Left ventricle myocardium superior (tissue), 1 donor: ENCODE measurements at regions of chr6 and their contacts with region 1.

Region 1: DNA sequence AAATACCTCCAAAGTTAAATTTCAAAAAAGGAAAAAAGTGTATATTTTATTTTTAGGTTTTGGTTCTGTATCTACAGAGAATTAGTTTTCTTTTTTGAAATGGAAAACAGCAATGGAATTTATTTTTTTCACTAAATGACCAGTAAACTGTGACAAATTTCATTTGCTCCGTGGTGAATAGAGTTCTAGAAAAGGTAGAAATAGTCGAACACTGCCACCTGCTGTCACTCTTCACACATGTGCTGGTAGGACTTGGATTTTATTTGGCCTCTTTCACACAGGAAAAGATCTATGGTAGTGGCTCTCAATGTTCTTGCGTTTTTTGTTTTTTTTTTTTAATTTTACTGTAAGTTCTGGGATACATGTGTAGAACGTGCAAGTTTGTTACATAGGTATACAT is 312.5 kb downstream of the EYA4 start:
- DNase-seq: no peak
- ATAC-seq: peak; percentile 62

Region 2: GRCh38 chr6:132830334-132830751 is 723.3 kb before region 1 on chr6:
- intact Hi-C with region 1: loop called (anchors 10 kb)
- DNase-seq: no peak
- ATAC-seq: peak; percentile 38

Region 3: DNA sequence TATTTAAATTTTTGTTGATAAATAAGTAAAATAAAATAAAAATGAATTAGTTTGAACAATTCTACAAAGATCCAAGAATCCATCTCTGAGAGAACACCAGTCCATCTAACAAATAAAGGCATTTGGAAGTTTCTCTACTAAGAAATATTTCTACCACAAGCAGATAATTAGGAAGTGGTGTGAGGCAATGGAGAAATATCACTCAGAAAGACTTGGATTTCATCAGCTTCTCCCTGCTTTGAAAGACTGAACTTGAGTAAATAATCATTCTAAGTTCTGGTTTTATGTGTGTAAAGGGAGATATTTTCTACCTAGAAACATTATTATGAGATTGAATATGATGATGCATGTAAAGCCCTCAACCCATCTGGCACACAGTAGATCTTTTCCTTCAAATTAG is 317.5 kb after region 1 on chr6:
- intact Hi-C with region 1: no loop called
- DNase-seq: no peak
- ATAC-seq: no peak